Psoas muscle (tissue), 8 donors: ENCODE measurements at regions of chr4 and their contacts with region 1.

Region 1: DNA sequence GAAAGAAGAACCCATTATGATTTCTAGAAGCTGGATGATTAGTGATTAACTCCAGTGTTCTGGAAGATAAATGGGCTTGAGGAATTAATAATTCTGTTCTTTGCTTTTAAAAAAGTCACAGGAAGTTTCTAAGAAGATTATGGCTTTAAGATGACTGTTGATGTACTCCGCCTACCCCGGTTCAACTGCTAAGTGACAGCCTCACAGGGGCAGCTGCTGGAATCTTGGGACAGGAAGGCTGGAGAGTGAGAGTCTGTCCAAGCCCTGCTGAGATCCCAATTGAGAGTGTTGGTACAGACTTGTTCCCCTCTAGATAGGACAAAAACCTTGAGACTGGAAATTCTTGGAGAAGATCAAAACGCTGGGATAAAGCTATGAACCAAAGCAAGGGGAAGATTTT is 37.3 kb downstream of the NPY1R start:
- DNase-seq: no peak
- ATAC-seq: no peak
- H3K4me3 ChIP-seq: no peak overlapping the region
- H3K27ac ChIP-seq: no peak overlapping the region
- H3K4me1 ChIP-seq: no peaks in the 10 kb centered on the region
- H3K27me3 ChIP-seq: no peaks in the 10 kb centered on the region
- CTCF ChIP-seq: no peak

Region 2: GRCh38 chr4:163523791-163524365 is 228.7 kb after region 1 on chr4:
- intact Hi-C with region 1: no loop called
- DNase-seq: no peak
- ATAC-seq: no peak
- H3K4me3 ChIP-seq: no peak overlapping the region
- H3K27ac ChIP-seq: no peak overlapping the region
- H3K4me1 ChIP-seq: no peaks in the 10 kb centered on the region
- H3K27me3 ChIP-seq: no peaks in the 10 kb centered on the region
- CTCF ChIP-seq: no peak

Region 3: GRCh38 chr4:164326056-164326455 is 1030.9 kb after region 1 on chr4:
- intact Hi-C with region 1: loop called in 1 of 2 experiments (anchors 5 kb)
- DNase-seq: no peak
- ATAC-seq: no peak
- H3K4me3 ChIP-seq: no peak overlapping the region
- H3K27ac ChIP-seq: no peak overlapping the region
- H3K4me1 ChIP-seq: no peaks in the 10 kb centered on the region
- H3K27me3 ChIP-seq: no peaks in the 10 kb centered on the region
- CTCF ChIP-seq: no peak